Heart left ventricle (tissue), 16 donors: ENCODE measurements at regions of chr6 and their contacts with region 1.

Region 1: DNA sequence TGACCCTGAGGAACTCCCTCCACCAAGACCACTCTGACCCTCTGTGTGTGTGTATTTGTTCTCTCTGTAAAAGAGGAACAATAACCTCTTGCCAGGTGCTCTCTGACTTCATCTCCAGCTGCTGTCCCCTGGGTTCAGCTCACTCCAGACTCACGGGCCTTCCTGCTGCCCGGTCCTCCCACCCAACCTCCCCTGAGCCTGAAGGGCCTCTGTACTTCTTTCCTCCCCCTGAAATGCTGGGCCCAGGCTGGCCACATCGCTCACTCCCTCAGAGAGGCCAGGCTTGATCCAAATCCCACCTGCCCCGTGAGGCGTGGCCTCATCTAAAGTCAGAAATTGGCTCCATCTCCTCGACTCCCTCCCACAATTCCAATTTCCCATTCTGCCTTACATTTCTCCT is 202.4 kb downstream of the PRKN start:
- DNase-seq: no peak
- ATAC-seq: no peak
- H3K4me3 ChIP-seq: no peak overlapping the region
- H3K27ac ChIP-seq: no peak overlapping the region
- H3K4me1 ChIP-seq: no peaks in the 10 kb centered on the region
- H3K27me3 ChIP-seq: no peaks in the 10 kb centered on the region
- CTCF ChIP-seq: no peak
- POLR2A ChIP-seq: no peak

Region 2: GRCh38 chr6:161168281-161168891 is 1356.8 kb before region 1 on chr6:
- intact Hi-C with region 1: no loop called
- DNase-seq: peak in 1 of 5 donors; percentile 39
- ATAC-seq: peak in 3 of 4 donors; percentile 37 to 63 (median 41)
- H3K4me3 ChIP-seq: no peak overlapping the region
- H3K27ac ChIP-seq: no peak overlapping the region
- H3K4me1 ChIP-seq: peaks cover 0 to 17% (median 0%) of the 10 kb centered on the region in 12 donors
- H3K27me3 ChIP-seq: no peaks in the 10 kb centered on the region
- CTCF ChIP-seq: no peak
- POLR2A ChIP-seq: no peak

Region 3: GRCh38 chr6:162198925-162199324 is 326.3 kb before region 1 on chr6:
- intact Hi-C with region 1: no loop called
- DNase-seq: no peak
- ATAC-seq: no peak
- H3K4me3 ChIP-seq: no peak overlapping the region
- H3K27ac ChIP-seq: no peak overlapping the region
- H3K4me1 ChIP-seq: peaks cover 0 to 33% (median 11%) of the 10 kb centered on the region in 12 donors
- H3K27me3 ChIP-seq: no peaks in the 10 kb centered on the region
- CTCF ChIP-seq: no peak
- POLR2A ChIP-seq: no peak

Region 4: GRCh38 chr6:162450358-162450757 is 74.8 kb before region 1 on chr6:
- intact Hi-C with region 1: loop called in 1 of 10 experiments (anchors 5 kb)
- DNase-seq: no peak
- ATAC-seq: no peak
- H3K4me3 ChIP-seq: no peak overlapping the region
- H3K27ac ChIP-seq: no peak overlapping the region
- H3K4me1 ChIP-seq: peaks cover 0 to 2% (median 0%) of the 10 kb centered on the region in 12 donors
- H3K27me3 ChIP-seq: no peaks in the 10 kb centered on the region
- CTCF ChIP-seq: no peak
- POLR2A ChIP-seq: no peak

Region 5: DNA sequence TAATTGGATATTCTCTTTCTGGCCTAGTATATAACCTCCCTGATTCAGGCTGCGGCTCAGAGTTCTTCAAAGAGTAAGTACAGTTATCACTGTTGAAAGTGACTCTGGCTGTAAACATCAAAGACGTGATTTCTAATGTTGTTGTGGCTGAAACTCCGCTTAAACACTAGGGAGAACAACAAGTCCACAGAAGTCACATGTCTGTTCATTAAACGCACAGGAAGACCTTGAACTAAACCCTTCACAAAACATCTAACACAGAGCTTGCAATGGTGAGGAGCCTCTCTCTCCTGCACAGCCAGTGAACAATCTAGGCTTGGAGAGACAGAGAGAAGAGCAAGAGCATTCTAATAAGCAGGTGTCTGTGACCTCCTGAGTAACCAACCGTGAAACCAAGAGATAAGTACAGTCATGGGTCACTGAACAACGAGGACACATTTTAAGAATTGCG is 47.0 kb before region 1 on chr6:
- intact Hi-C with region 1: no loop called
- DNase-seq: no peak
- ATAC-seq: peak in 2 of 4 donors; percentile 24 to 43
- H3K4me3 ChIP-seq: no peak overlapping the region
- H3K27ac ChIP-seq: peak overlapping the region in 3 of 12 donors; percentile 10 to 35 (median 26)
- H3K4me1 ChIP-seq: peaks cover 0 to 15% (median 0%) of the 10 kb centered on the region in 12 donors
- H3K27me3 ChIP-seq: no peaks in the 10 kb centered on the region
- CTCF ChIP-seq: no peak
- POLR2A ChIP-seq: no peak